ENCODE measurements at regions of chr10 and their contacts with region 1.

Region 1: DNA sequence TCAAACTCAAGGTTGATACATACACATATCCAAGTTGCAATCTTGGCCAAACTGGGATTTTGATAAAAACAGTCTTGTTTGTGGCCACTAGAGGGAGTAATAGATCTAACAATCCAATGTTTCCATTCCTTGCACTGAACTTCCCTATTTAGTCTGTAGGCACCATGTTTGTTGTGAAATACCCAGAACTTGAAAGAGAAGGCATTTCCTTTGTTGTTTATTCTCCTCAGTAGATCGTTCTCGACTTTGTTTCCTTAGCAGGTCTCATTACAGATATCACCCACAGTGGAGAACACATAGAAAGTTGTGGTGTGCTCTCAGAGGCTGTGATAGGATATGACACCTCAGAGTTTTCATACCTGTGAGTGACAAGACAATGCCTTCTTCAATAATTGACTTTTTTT is 70.3 kb upstream of the MXI1 start:
- DNase-seq: peak; percentile 66
- H3K27ac ChIP-seq: no peak overlapping the region
- CTCF ChIP-seq: peak; percentile 74

Region 2: GRCh38 chr10:110007701-110008517 is 129.2 kb before region 1 on chr10 and contains the start of gene ADD3:
- CTCF ChIA-PET with region 1: no interaction called
- POLR2A ChIA-PET with region 1: no interaction called
- DNase-seq: peak; percentile 84
- H3K27ac ChIP-seq: peak within 1 kb of the TSS; percentile 62
- CTCF ChIP-seq: no peak

Region 3: GRCh38 chr10:110209454-110209925 is 72.3 kb after region 1 on chr10:
- CTCF ChIA-PET with region 1: interaction called, 10 read pairs
- POLR2A ChIA-PET with region 1: no interaction called
- DNase-seq: peak; percentile 80
- H3K27ac ChIP-seq: peak overlapping the region; percentile 90
- CTCF ChIP-seq: no peak

Region 4: GRCh38 chr10:110225756-110226542 is 88.8 kb after region 1 on chr10:
- CTCF ChIA-PET with region 1: interaction called, 24 read pairs
- POLR2A ChIA-PET with region 1: no interaction called
- DNase-seq: peak; percentile 94
- H3K27ac ChIP-seq: peak overlapping the region; percentile 91
- CTCF ChIP-seq: peak; percentile 67

Region 5: DNA sequence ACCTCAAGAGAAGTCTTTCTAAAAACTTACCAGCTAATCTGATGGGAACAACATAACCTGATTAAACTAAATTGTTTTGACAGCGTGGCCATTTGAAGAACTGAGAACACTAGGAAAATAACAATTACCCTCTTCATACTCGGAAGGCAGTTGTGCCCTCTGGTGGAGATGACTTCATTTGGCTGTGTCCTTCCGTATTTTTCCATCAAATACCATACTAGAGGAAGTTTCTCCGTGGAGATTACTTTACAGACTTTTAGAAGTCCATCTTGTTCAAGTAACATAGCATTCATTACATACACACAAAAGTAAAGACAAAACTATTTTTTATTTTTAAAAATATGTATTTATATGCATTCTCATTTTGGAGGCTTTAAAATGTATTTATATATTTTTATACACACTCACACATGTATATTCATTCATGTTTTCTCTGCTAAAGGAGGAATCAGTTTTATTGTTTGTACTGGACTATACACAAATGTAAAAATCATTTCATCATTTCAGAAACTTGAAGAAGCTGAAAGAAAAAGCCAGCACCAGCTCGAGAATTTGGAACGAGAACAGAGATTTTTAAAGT is 142.4 kb after region 1 on chr10:
- CTCF ChIA-PET with region 1: interaction called, 19 read pairs
- POLR2A ChIA-PET with region 1: no interaction called
- DNase-seq: peak; percentile 62
- H3K27ac ChIP-seq: no peak overlapping the region
- CTCF ChIP-seq: peak; percentile 75

Measured in RWPE1 (cell line).